ENCODE measurements at regions of chr12 and their contacts with region 1.

Region 1: DNA sequence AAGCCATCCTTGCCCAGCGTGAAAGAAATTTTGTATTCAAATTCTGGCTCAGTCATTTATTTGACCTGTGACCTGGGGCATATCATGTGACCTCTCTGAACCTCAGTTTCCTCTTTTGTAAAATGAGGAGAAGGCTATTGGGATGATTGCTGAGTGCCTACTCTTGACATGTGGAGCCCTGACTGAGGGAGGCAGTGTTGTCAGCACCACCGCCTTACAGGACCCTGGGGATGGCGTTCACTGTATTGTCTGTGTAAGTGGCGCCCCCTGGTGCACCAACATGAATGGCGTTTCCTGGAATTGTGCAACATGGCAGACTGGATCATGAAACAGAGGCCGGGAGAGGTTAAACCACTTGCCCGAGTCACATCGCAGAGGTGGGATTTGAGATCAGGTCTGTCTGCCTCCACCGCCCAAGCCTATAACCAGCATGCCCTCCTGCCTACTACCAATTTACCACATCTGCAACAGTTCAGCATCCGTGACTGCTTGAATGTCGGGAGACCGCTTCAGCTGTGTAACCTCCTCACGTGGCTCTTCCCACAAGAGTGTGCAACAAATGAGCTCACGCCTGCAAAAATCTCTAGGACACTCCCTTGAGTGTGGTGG is 20.1 kb upstream of the CCDC63 start:
- DNase-seq: peak; percentile 78 to 94
- ATAC-seq: peak; percentile 95 to 98
- H3K4me3 ChIP-seq: no peak overlapping the region
- H3K27ac ChIP-seq: peak overlapping the region in 1 of 2 experiments; percentile 64; a peak in 1 of 6 replicates
- H3K4me1 ChIP-seq: no peaks in the 10 kb centered on the region
- CTCF ChIP-seq: peak; percentile 95
- EP300 ChIP-seq: no peak
- POLR2A ChIP-seq: no peak
- RAD21 ChIP-seq: peak; percentile 92 to 98

Region 2: DNA sequence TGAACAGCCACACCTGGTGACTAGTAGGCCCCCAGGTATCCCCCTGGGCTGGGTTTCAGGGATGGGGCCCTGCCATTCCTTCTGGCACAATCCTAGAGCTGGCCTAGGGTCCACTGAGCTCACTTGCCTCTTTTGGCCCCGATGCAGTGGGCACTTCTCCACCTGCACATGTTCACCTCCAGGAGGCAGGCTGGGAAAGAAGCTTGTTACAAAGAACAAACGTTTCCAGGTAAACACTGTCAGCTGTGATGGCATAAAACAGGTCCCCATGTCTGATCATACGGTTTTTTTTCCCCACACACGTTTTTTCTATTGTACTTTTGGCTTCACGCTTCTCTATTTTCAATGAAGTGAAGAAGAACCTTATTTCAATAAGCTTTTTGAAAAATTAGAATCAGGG is 121.9 kb before region 1 on chr12:
- CTCF ChIA-PET with region 1: interaction called, 15 read pairs
- POLR2A ChIA-PET with region 1: no interaction called
- DNase-seq: peak; percentile 38 to 53
- ATAC-seq: peak; percentile 83 to 84
- H3K4me3 ChIP-seq: no peak overlapping the region
- H3K27ac ChIP-seq: no peak overlapping the region
- H3K4me1 ChIP-seq: no peaks in the 10 kb centered on the region
- CTCF ChIP-seq: 0 out of 3 replicates have a peak, but pooled peaks have one; percentile 15
- EP300 ChIP-seq: no peak
- POLR2A ChIP-seq: no peak
- RAD21 ChIP-seq: peak; percentile 15 to 41; a peak in 2 of 5 replicates

Region 3: DNA sequence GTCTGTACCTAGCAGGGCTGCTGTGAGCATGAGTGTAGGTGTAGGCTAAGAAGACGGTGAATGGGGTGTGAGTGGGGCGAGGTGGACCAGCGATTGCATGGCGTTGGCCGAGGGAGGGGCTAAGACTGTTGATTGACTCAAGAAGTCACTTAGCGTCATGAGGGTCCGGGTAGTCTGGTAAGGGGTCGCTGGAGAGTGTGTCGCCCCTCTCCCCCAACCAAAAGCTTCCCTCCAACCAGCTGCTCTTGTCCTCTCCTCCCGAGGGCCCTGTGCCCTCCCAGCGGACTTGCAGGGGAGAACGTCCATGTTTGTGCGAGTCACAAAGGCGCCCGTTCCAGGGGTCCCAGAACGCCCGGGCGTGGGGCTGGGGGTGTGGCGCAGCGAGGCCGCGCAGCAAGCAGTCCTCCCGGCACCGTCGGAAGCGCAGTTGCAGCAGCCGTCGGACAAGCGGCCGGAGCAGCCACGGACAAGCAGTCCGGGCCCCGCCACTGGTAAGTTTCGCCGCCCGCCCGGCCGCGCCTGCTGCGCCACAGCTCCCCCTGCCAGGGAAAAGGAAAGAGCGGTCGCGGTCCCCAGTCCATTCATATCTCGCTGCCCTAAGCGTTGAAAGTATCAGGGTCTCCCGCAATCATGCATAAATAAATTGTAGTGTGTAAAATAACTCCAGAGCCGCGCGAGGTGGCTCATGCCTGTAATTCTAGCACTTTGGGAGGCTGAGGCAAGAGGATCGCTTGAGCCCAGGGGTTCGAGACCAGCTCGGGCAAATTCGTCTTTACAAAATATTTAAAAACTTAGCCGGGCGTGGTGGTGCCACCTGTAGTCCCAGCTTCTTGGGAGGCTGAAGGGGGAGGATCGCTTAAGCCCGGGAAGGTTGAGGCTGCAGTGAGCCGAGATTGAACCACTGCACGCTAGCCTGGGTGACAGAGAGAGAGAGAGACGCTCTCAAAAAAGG is 20.2 kb after region 1 on chr12 and contains the start of gene CCDC63:
- CTCF ChIA-PET with region 1: interaction called, 34 read pairs
- POLR2A ChIA-PET with region 1: no interaction called
- DNase-seq: peak; percentile 75 to 83
- ATAC-seq: peak; percentile 92 to 95
- H3K4me3 ChIP-seq: peak within 1 kb of the TSS; percentile 63
- H3K27ac ChIP-seq: peak within 1 kb of the TSS; percentile 76 to 90
- H3K4me1 ChIP-seq: no peaks in the 10 kb centered on the region
- CTCF ChIP-seq: peak; percentile 59
- EP300 ChIP-seq: no peak
- POLR2A ChIP-seq: no peak
- RAD21 ChIP-seq: peak; percentile 39 to 46
- polyA plus RNA-seq, gene CCDC63: 0.04 and 0.05 TPM in 2 replicates

Region 4: GRCh38 chr12:111056618-111057521 is 230.2 kb after region 1 on chr12:
- CTCF ChIA-PET with region 1: no interaction called
- POLR2A ChIA-PET with region 1: no interaction called
- DNase-seq: no peak
- ATAC-seq: no peak
- H3K4me3 ChIP-seq: no peak overlapping the region
- H3K27ac ChIP-seq: no peak overlapping the region
- H3K4me1 ChIP-seq: no peaks in the 10 kb centered on the region
- CTCF ChIP-seq: no peak
- EP300 ChIP-seq: no peak
- POLR2A ChIP-seq: no peak
- RAD21 ChIP-seq: no peak

Measured in A549 (cell line).